IMR-90 (cell line): ENCODE measurements at regions of chr3 and their contacts with region 1.

Region 1: DNA sequence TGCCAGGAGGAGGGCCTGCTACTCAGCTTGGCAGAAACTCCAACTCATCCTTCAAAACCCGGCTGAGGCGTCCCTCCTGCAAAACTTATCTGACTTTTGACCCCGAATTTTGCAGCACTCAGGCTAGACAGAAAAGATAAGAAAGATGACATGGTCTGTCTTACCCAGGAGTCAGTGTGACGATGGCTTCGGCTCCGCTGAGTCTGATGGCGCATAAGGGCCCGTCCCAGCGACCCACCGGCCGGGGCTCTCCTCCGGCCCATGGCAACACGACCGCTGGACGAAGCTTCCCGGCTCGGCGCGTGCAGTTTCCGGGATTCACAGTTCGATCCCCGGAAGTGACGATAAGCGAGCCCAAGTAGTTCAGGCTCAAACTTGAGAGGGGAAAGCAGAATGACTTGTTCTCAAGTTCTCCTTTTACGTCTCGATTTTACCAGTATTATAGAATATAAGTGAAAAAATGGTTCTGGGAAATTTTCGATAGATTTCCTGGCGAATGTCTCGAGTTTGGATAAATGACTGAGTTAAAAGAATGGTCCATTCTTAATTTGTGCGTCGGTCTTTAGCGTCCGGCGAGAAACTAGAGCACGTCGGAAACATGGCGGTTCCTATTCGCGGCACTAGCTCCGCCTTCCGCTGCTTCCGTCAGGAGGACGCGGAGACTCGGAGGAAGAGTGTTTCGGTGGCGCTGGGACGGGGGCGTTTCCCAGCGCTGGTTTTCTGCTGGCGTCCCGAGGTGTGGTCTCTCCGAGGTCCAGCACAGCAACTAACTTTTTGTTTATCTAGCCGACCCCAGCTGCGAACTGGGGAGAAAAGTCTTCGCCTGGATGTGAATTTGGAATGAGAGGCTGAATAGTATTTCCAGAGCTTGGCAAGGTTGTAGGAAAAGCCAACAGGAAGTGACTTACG is at the start of gene LSG1:
- DNase-seq: peak; percentile 97
- ATAC-seq: peak; percentile 97
- H3K4me3 ChIP-seq: peak within 1 kb of the TSS; percentile 87
- H3K27ac ChIP-seq: peak within 1 kb of the TSS; percentile 86
- H3K4me1 ChIP-seq: peaks cover 1% of the 10 kb centered on the region; the same call in 1 of the 2 replicates
- H3K27me3 ChIP-seq: peaks cover 2% of the 10 kb centered on the region; the same call in 1 of the 2 replicates
- CTCF ChIP-seq: no peak
- POLR2A ChIP-seq: peak; percentile 67; the same call in 1 of the 2 replicates
- RAD21 ChIP-seq: no peak
- total RNA-seq, gene LSG1: 45.2 and 46.7 TPM in 2 replicates

Region 2: DNA sequence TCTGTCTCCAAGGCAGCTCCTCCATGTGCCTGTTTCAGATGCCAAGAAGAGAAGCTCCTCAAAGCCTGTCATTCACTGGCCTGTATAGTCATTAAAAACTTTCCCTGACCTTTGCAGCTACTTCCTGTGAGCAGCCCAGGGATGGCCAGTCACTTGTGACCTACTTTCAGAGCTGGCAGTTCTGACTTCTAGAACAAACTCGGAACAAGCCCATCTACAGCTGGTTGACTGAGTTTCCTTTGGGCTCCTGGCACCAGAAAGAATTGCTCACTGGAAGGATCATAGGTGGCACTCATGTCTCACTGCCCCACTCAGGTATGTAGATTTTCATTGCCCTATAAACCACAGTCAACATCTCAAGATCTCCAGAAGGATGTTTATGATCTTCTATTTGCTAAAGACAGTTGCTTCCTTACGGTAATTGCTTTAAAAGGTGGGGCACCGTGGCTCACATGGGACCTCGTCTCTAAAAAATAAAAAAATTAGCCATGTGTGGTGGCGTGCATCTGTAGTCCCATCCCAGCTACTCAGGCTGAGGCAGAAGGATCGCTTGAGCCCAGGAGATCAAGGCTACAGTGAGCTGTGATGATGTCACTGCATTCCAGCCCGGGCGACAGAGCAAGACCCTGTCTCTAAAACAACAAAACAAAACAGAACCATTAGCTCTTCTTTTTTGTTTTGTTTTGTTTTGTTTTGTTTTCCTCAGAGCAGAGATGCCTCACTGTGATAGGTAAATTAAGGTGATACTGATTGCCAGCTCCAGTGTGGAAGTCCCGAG is 174.1 kb before region 1 on chr3:
- CTCF ChIA-PET with region 1: no interaction called
- POLR2A ChIA-PET with region 1: no interaction called
- dilution Hi-C with region 1: no loop called
- in situ Hi-C with region 1: no loop called
- intact Hi-C with region 1: no loop called
- DNase-seq: no peak
- ATAC-seq: no peak
- H3K4me3 ChIP-seq: no peak overlapping the region
- H3K27ac ChIP-seq: peak overlapping the region; percentile 23; the same call in 1 of the 2 replicates
- H3K4me1 ChIP-seq: peaks cover 18% of the 10 kb centered on the region
- H3K27me3 ChIP-seq: no peaks in the 10 kb centered on the region
- CTCF ChIP-seq: no peak
- POLR2A ChIP-seq: no peak
- RAD21 ChIP-seq: no peak

Region 3: DNA sequence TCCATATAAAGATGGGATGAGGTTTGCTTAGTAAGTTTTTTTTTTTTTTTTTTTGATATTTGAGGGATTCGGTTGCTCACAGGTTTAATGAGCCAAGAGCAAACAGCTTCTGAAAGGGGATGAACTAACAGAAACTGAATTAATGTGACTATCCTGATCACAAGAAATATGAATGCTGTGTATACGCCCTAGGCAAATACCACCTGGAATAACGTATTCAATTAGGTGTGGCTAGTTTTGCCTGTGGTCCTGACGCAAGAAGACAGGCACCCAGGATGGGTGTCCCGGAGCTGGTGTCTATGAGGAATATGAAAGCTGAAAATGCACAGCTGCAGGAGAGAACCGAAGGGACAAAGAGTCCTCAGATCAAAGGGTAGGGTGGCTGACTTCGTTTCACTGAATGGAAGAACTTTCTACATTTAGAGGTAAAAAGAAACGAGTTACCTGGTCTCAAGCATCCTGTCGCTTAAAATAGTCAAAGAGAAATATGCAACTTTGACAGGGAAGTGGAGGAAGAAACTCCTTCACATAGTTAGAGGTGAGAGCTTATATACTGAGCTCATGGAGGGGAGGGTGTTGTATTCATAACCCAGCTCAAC is 14.6 kb before region 1 on chr3:
- CTCF ChIA-PET with region 1: interaction called, 3 read pairs
- POLR2A ChIA-PET with region 1: interaction called, 11 read pairs
- dilution Hi-C with region 1: no loop called
- in situ Hi-C with region 1: no loop called
- intact Hi-C with region 1: no loop called
- DNase-seq: no peak
- ATAC-seq: no peak
- H3K4me3 ChIP-seq: no peak overlapping the region
- H3K27ac ChIP-seq: no peak overlapping the region
- H3K4me1 ChIP-seq: no peaks in the 10 kb centered on the region; the same call in 1 of the 2 replicates
- H3K27me3 ChIP-seq: no peaks in the 10 kb centered on the region
- CTCF ChIP-seq: no peak
- POLR2A ChIP-seq: no peak
- RAD21 ChIP-seq: no peak

Region 4: DNA sequence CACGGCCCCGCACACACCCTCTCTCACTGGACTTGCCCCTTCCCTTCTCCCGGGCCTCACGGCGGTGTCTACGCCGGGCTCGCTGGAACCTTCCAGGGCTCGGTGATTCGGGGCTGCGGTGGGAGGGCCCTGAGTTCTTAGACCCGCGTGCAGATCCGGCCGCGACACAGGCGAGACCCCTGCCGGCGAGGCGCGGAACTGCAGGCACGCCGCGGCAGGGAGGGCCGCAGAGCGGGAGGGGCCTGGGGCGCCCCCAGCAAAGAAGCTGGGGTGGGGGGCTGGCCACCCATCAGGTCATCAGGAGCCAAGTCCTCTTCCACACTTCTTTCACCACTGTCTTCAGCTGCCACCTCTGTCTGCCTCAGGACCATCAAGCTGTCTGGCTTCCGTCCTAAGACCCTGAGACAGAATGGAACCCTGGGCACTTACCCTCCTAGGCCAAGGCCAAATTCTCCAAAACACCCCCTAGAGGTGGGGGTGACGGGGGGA is 434.3 kb after region 1 on chr3:
- CTCF ChIA-PET with region 1: interaction called, 5 read pairs
- POLR2A ChIA-PET with region 1: no interaction called
- dilution Hi-C with region 1: no loop called
- in situ Hi-C with region 1: loop called (anchors 5 kb)
- intact Hi-C with region 1: no loop called
- DNase-seq: peak; percentile 52
- ATAC-seq: peak; percentile 91
- H3K4me3 ChIP-seq: no peak overlapping the region
- H3K27ac ChIP-seq: peak overlapping the region; percentile 29; the same call in 1 of the 2 replicates
- H3K4me1 ChIP-seq: peaks cover 10% of the 10 kb centered on the region
- H3K27me3 ChIP-seq: no peaks in the 10 kb centered on the region
- CTCF ChIP-seq: peak; percentile 89
- POLR2A ChIP-seq: no peak
- RAD21 ChIP-seq: peak; percentile 87

Region 5: DNA sequence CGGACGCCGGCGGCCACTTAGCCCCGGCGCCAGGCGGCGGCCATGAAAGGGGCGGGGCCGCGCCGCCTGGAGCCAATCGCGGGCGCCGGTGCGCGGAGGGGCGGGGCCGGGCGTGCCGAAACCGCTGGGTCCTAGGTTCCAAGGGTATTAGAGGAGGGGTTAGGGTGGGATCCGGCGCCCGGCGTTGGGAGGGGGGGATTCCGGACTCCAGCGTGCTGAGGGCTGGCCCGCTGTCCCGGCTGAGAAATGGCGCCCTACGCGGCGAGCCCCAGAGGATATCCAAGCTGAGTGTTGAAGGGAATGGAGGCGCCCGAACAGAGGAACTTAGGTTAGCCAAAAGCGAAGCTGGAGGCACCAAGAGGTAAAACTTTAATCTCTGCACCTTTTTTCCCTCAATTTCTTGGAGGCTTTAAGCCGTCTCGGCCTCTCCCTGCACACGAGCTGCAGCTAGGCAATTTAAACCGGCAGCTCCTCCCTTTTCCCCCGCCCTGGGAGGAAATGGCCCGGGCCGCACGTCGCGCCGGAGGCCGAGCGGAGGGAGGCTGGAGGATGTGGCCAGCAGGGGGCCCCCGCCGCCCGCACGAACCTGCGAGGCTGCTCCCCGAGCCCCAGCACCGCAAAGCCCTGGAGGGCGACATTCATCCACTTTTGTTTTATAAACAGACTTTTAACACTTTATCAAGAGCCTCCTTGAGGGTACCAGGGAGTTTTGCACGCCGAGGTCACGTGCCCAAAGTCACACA is 599.1 kb after region 1 on chr3 and contains the start of gene XXYLT1:
- CTCF ChIA-PET with region 1: interaction called, 5 read pairs
- POLR2A ChIA-PET with region 1: no interaction called
- dilution Hi-C with region 1: no loop called
- in situ Hi-C with region 1: loop called (anchors 5 kb)
- intact Hi-C with region 1: no loop called
- DNase-seq: peak; percentile 80
- ATAC-seq: peak; percentile 89
- H3K4me3 ChIP-seq: peak within 1 kb of the TSS; percentile 93
- H3K27ac ChIP-seq: peak within 1 kb of the TSS; percentile 86
- H3K4me1 ChIP-seq: peaks cover 5% of the 10 kb centered on the region
- H3K27me3 ChIP-seq: no peaks in the 10 kb centered on the region
- CTCF ChIP-seq: peak; percentile 98
- POLR2A ChIP-seq: 0 out of 2 replicates have a peak, but pooled peaks have one; percentile 22
- RAD21 ChIP-seq: peak; percentile 89
- total RNA-seq, gene XXYLT1: 13.1 and 14.7 TPM in 2 replicates

Region 6: GRCh38 chr3:195522254-195523023 is 850.3 kb after region 1 on chr3:
- CTCF ChIA-PET with region 1: no interaction called
- POLR2A ChIA-PET with region 1: no interaction called
- dilution Hi-C with region 1: no loop called
- in situ Hi-C with region 1: loop called (anchors 10 kb)
- intact Hi-C with region 1: no loop called
- DNase-seq: peak; percentile 35
- ATAC-seq: peak; percentile 59
- H3K4me3 ChIP-seq: no peak overlapping the region
- H3K27ac ChIP-seq: no peak overlapping the region
- H3K4me1 ChIP-seq: no peaks in the 10 kb centered on the region
- H3K27me3 ChIP-seq: no peaks in the 10 kb centered on the region
- CTCF ChIP-seq: peak; percentile 77
- POLR2A ChIP-seq: no peak
- RAD21 ChIP-seq: peak; percentile 73